A673 (cell line): ENCODE measurements at regions of chr1 and their contacts with region 1.

Region 1: GRCh38 chr1:23344111-23344986 is at the start of gene HNRNPR:
- DNase-seq: peak; percentile 100
- H3K4me3 ChIP-seq: peak within 1 kb of the TSS; percentile 70
- H3K27ac ChIP-seq: peak within 1 kb of the TSS; percentile 96
- H3K4me1 ChIP-seq: peaks cover 15% of the 10 kb centered on the region
- H3K27me3 ChIP-seq: no peaks in the 10 kb centered on the region
- CTCF ChIP-seq: no peak
- total RNA-seq, gene HNRNPR: 300 and 304 TPM in 2 replicates

Region 2: GRCh38 chr1:23290836-23291565 is 53.3 kb before region 1 on chr1:
- CTCF ChIA-PET with region 1: no interaction called
- POLR2A ChIA-PET with region 1: interaction called, 14 read pairs
- intact Hi-C with region 1: no loop called
- DNase-seq: no peak
- H3K4me3 ChIP-seq: no peak overlapping the region
- H3K27ac ChIP-seq: no peak overlapping the region
- H3K4me1 ChIP-seq: no peaks in the 10 kb centered on the region
- H3K27me3 ChIP-seq: no peaks in the 10 kb centered on the region
- CTCF ChIP-seq: no peak

Region 3: GRCh38 chr1:23367791-23368561 is 23.6 kb after region 1 on chr1:
- CTCF ChIA-PET with region 1: interaction called, 10 read pairs
- POLR2A ChIA-PET with region 1: interaction called, 13 read pairs
- intact Hi-C with region 1: no loop called
- DNase-seq: peak; percentile 100
- H3K4me3 ChIP-seq: peak overlapping the region; percentile 75
- H3K27ac ChIP-seq: peak overlapping the region; percentile 98
- H3K4me1 ChIP-seq: peaks cover 24% of the 10 kb centered on the region
- H3K27me3 ChIP-seq: no peaks in the 10 kb centered on the region
- CTCF ChIP-seq: no peak

Region 4: DNA sequence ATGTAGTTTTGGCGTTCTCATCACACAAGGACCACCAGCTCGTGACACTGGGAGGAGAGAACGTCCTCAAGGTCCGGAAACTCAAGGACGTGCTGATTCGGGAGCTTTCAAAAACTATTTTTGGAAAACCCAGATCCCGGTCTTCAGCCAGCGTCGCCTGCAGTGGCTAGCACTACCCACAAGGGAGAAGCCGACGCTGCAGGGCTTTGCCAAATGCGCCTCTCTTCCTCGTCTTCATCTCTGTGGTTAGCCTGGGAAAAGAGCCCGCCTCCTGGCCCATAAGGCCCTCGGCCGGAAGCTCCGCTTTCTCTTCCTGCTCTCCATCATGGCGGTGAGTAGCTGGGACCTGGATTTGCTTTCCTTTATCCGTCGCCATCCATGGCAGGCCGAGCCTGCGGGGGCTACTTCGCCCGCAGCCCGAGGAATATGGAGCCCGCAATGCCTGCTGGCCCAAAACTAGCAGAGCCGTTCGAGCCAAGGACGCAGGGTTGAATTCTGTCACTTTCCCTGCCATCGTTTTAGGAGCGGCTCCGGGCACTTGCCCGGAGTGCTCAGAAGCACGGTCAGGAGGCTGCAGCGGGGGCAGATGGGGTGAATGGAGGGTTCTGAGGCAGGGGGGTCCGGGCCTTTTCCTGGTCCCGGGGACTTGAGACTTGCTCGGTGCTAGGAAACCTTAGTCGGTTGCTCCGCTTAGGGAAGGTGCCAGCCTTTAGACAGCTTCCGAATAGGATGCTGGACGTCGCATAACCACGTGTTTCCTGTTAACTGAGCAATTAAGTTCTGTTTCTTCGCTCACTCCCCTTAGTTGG is 347.4 kb after region 1 on chr1 and contains the start of gene RPL11:
- CTCF ChIA-PET with region 1: no interaction called
- POLR2A ChIA-PET with region 1: interaction called, 14 read pairs
- intact Hi-C with region 1: no loop called
- DNase-seq: peak; percentile 98
- H3K4me3 ChIP-seq: peak within 1 kb of the TSS; percentile 92
- H3K27ac ChIP-seq: peak within 1 kb of the TSS; percentile 93
- H3K4me1 ChIP-seq: peaks cover 30% of the 10 kb centered on the region
- H3K27me3 ChIP-seq: no peaks in the 10 kb centered on the region
- CTCF ChIP-seq: peak; percentile 79
- total RNA-seq, gene RPL11: 1,180 and 1,206 TPM in 2 replicates